ENCODE measurements at regions of chr3 and their contacts with region 1.

Region 1: GRCh38 chr3:121545574-121546455 is at the start of gene POLQ:
- DNase-seq: peak; percentile 92
- ATAC-seq: peak; percentile 94
- H3K4me3 ChIP-seq: peak within 1 kb of the TSS; percentile 96 to 99
- H3K27ac ChIP-seq: peak within 1 kb of the TSS; percentile 48
- H3K4me1 ChIP-seq: peaks cover 0 to 11% of the 10 kb centered on the region in 2 experiments; a peak in 3 of 4 replicates
- H3K27me3 ChIP-seq: no peaks in the 10 kb centered on the region
- CTCF ChIP-seq: no peak
- POLR2A ChIP-seq: peak; percentile 39
- RAD21 ChIP-seq: no peak
- total RNA-seq, gene POLQ: 12.3 TPM

Region 2: GRCh38 chr3:121834696-121835464 is 289.1 kb after region 1 on chr3 and contains the starts of genes EAF2 and IQCB1:
- CTCF ChIA-PET with region 1: no interaction called
- POLR2A ChIA-PET with region 1: no interaction called
- RAD21 ChIA-PET with region 1: no interaction called
- intact Hi-C with region 1: loop called (anchors 5 kb)
- DNase-seq: peak; percentile 93
- ATAC-seq: peak; percentile 99
- H3K4me3 ChIP-seq: peak within 1 kb of the TSS; percentile 82 to 94
- H3K27ac ChIP-seq: peak within 1 kb of the TSS; percentile 46
- H3K4me1 ChIP-seq: peaks cover 0 to 15% of the 10 kb centered on the region in 2 experiments; a peak in 2 of 4 replicates
- H3K27me3 ChIP-seq: no peaks in the 10 kb centered on the region; the same call in 1 of the 2 replicates
- CTCF ChIP-seq: no peak
- POLR2A ChIP-seq: peak; percentile 80
- RAD21 ChIP-seq: no peak
- total RNA-seq, gene EAF2: 4.4 TPM
- total RNA-seq, gene IQCB1: 22.2 TPM

Region 3: DNA sequence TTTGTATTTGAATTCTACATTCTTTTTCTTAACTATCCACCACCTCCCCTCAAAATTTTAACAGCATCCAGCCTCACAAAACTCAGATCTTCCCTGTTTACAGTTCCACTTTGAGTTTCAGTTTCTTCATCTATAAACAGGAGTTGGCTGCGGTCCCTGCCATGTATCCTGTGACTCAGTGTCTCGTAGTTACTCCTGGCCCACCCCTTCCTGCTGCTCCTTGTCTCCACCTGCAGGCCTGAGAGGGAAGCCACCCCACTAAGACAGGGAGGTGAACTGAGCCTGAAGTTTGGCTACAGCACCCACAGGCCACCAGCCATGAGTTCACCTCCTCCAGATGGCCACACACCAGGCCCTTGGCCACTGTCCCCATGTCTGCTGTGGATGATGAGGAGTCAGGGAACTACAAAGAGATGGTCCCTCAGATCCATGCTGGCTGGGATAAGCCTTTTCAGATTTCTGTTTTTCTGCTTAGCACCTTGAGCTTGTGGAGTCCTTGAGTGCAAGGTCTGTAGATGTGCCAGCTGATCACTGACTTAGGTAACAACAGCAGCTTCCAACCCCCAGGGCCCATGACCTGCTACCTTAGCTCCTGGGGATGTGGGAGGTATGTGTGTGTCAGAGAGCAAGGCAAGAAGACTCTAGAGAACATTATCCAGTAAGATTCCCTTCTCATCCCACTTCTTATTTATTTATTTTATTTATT is 546.8 kb after region 1 on chr3:
- CTCF ChIA-PET with region 1: interaction called, 5 read pairs
- POLR2A ChIA-PET with region 1: no interaction called
- RAD21 ChIA-PET with region 1: no interaction called
- intact Hi-C with region 1: loop called (anchors 1 kb)
- DNase-seq: peak; percentile 10
- ATAC-seq: peak; percentile 97
- H3K4me3 ChIP-seq: no peak overlapping the region
- H3K27ac ChIP-seq: no peak overlapping the region
- H3K4me1 ChIP-seq: no peaks in the 10 kb centered on the region
- H3K27me3 ChIP-seq: 0 out of 2 replicates have a peak, but pooled peaks cover 1% of the 10 kb centered on the region
- CTCF ChIP-seq: peak; percentile 32 to 80 (median 70); a peak in 5 of 6 replicates
- POLR2A ChIP-seq: no peak
- RAD21 ChIP-seq: peak; percentile 53

Region 4: DNA sequence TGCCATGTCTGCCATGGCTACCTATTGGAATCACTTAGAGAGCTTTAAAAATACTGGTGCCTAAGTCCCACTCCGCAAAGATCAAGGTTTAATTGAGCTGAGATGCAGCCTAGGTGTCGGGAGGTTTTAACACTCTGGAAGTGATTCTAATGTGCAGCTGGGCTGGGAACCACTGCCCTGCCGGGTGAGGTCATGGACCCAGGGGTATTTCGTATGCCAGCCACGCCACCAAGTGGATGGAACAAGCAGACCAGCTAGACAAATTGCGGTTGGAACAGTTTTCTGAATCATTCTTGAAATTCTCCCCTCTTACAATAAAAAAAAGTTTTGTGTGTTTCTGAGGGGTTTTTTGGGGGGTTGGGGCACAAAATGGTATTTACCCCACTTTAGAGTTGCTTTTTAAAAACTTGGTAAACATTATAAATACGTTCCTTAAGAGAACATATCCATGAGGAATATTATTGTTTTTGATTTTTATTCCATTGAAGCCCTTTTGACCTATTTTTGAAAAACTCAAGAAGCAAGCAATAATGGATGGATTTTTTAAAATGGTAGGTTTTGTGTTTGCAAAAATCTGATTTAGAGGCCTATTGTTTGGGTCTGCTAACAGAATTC is 713.0 kb after region 1 on chr3:
- CTCF ChIA-PET with region 1: interaction called, 7 read pairs
- POLR2A ChIA-PET with region 1: interaction called, 4 read pairs
- RAD21 ChIA-PET with region 1: interaction called in 1 of 2 experiments, 5 read pairs
- intact Hi-C with region 1: loop called (anchors 1 kb)
- DNase-seq: peak; percentile 53
- ATAC-seq: peak; percentile 99
- H3K4me3 ChIP-seq: no peak overlapping the region
- H3K27ac ChIP-seq: no peak overlapping the region
- H3K4me1 ChIP-seq: 0 out of 4 replicates have a peak, but pooled peaks cover 0 to 3% of the 10 kb centered on the region in 2 experiments
- H3K27me3 ChIP-seq: no peaks in the 10 kb centered on the region
- CTCF ChIP-seq: peak; percentile 76 to 77 (median 76)
- POLR2A ChIP-seq: no peak
- RAD21 ChIP-seq: peak; percentile 90

Region 5: DNA sequence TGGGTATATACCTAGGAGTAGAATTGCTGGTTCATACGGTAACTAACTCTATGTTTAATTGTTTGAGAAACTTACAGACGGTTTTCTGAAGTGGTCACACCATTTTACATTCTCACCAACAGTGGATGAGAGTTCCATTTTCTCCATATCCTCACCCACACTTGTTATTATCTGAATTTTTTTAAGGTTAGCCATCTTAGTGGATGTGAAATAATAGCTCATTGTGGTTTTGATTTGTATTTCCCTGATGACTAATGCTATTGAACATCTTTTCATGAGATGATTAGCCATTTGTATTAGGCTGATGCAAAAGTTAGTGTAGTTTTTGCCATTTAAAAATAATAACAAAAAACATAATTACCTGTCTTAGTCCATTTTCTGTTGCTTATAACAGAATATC is 797.8 kb after region 1 on chr3:
- CTCF ChIA-PET with region 1: no interaction called
- POLR2A ChIA-PET with region 1: no interaction called
- RAD21 ChIA-PET with region 1: no interaction called
- intact Hi-C with region 1: no loop called
- DNase-seq: no peak
- ATAC-seq: no peak
- H3K4me3 ChIP-seq: no peak overlapping the region
- H3K27ac ChIP-seq: no peak overlapping the region
- H3K4me1 ChIP-seq: no peaks in the 10 kb centered on the region
- H3K27me3 ChIP-seq: no peaks in the 10 kb centered on the region
- CTCF ChIP-seq: no peak
- POLR2A ChIP-seq: no peak
- RAD21 ChIP-seq: no peak

Region 6: GRCh38 chr3:122356415-122356814 is 810.6 kb after region 1 on chr3:
- CTCF ChIA-PET with region 1: no interaction called
- POLR2A ChIA-PET with region 1: no interaction called
- RAD21 ChIA-PET with region 1: no interaction called
- intact Hi-C with region 1: loop called (anchors 1 kb)
- DNase-seq: peak; percentile 34
- ATAC-seq: peak; percentile 78
- H3K4me3 ChIP-seq: no peak overlapping the region
- H3K27ac ChIP-seq: no peak overlapping the region
- H3K4me1 ChIP-seq: no peaks in the 10 kb centered on the region
- H3K27me3 ChIP-seq: no peaks in the 10 kb centered on the region
- CTCF ChIP-seq: peak; percentile 51 to 59 (median 55); a peak in 5 of 6 replicates
- POLR2A ChIP-seq: no peak
- RAD21 ChIP-seq: peak; percentile 81

Region 7: GRCh38 chr3:122942937-122943827 is 1397.4 kb after region 1 on chr3:
- CTCF ChIA-PET with region 1: no interaction called
- POLR2A ChIA-PET with region 1: no interaction called
- RAD21 ChIA-PET with region 1: no interaction called
- intact Hi-C with region 1: loop called (anchors 2 kb)
- DNase-seq: peak; percentile 41
- ATAC-seq: peak; percentile 99
- H3K4me3 ChIP-seq: no peak overlapping the region
- H3K27ac ChIP-seq: no peak overlapping the region
- H3K4me1 ChIP-seq: no peaks in the 10 kb centered on the region
- H3K27me3 ChIP-seq: no peaks in the 10 kb centered on the region
- CTCF ChIP-seq: peak; percentile 94 to 99 (median 96)
- POLR2A ChIP-seq: no peak
- RAD21 ChIP-seq: peak; percentile 93